Activated CD4-positive, alpha-beta T cell treated with anti-CD3 and anti-CD28 coated beads, Interleukin-2, amount 10 ng/mL, durations not matched to agents 7 days and 5 days (primary cell): ENCODE measurements at regions of chr11 and their contacts with region 1.

Region 1: DNA sequence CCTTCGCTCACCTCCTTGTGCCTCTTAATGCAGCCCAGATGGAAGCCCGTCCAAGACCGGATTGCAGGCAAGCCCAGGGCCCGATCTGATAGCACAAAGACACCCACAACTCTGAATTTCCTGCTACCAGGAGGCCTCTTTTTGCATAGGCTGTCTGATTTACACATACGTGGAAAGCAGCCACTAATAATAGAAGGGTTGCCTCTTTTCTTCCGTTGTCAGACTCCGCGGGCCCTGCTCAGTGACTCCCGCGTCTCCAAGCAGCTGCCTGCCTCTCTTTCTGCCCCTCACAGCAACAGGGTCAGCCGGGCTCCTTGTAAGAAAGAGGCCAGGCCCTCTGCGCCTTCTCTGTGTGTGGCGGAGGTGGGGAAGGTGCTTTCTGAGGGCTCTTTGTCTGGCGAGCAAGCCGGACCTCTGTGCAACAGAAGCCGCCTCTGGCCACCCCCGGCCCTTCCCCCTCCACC is 26.7 kb downstream of the FLI1 start:
- DNase-seq: peak; percentile 53
- H3K4me3 Mint-ChIP-seq: peak overlapping the region; percentile 69
- H3K27ac Mint-ChIP-seq: peak overlapping the region; percentile 95
- H3K4me1 Mint-ChIP-seq: peaks cover 99% of the 10 kb centered on the region
- H3K27me3 Mint-ChIP-seq: peaks cover 2% of the 10 kb centered on the region

Region 2: GRCh38 chr11:128568166-128568778 is 152.3 kb before region 1 on chr11:
- CTCF ChIA-PET with region 1: no interaction called
- POLR2A ChIA-PET with region 1: no interaction called
- DNase-seq: no peak
- H3K4me3 Mint-ChIP-seq: no peak overlapping the region
- H3K27ac Mint-ChIP-seq: no peak overlapping the region
- H3K4me1 Mint-ChIP-seq: peaks cover 12% of the 10 kb centered on the region
- H3K27me3 Mint-ChIP-seq: no peaks in the 10 kb centered on the region

Region 3: DNA sequence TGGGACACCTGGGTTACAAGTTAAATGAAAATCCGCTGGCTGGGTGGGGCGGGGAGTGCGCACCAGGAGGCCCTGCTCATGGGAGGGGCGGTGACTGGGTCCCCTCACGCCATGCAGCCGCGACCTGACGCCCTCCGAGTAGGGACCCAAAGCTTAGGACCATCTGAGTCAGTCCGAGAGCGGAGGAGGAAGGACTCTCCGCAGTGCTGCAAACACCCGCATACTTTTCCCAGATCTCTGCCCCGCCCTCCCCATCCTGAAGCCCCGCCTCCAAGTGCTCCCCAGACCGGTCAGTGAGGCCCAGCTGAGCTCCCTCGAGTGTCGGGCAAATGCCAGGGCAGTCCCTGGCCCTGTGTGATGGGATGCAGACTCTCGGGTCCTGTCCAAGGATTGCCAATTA is 33.2 kb before region 1 on chr11:
- CTCF ChIA-PET with region 1: no interaction called
- POLR2A ChIA-PET with region 1: no interaction called
- DNase-seq: no peak
- H3K4me3 Mint-ChIP-seq: peak overlapping the region; percentile 61
- H3K27ac Mint-ChIP-seq: no peak overlapping the region
- H3K4me1 Mint-ChIP-seq: peaks cover 45% of the 10 kb centered on the region
- H3K27me3 Mint-ChIP-seq: peaks cover 78% of the 10 kb centered on the region

Region 4: GRCh38 chr11:128701086-128701485 is 19.5 kb before region 1 on chr11:
- CTCF ChIA-PET with region 1: interaction called, 20 read pairs
- POLR2A ChIA-PET with region 1: interaction called, 6 read pairs
- DNase-seq: no peak
- H3K4me3 Mint-ChIP-seq: no peak overlapping the region
- H3K27ac Mint-ChIP-seq: no peak overlapping the region
- H3K4me1 Mint-ChIP-seq: peaks cover 94% of the 10 kb centered on the region
- H3K27me3 Mint-ChIP-seq: no peaks in the 10 kb centered on the region